ENCODE measurements at regions of chr22 and their contacts with region 1.

Region 1: GRCh38 chr22:21020802-21021429 is 6.0 kb downstream of the P2RX6 start:
- DNase-seq: peak; percentile 73

Region 2: DNA sequence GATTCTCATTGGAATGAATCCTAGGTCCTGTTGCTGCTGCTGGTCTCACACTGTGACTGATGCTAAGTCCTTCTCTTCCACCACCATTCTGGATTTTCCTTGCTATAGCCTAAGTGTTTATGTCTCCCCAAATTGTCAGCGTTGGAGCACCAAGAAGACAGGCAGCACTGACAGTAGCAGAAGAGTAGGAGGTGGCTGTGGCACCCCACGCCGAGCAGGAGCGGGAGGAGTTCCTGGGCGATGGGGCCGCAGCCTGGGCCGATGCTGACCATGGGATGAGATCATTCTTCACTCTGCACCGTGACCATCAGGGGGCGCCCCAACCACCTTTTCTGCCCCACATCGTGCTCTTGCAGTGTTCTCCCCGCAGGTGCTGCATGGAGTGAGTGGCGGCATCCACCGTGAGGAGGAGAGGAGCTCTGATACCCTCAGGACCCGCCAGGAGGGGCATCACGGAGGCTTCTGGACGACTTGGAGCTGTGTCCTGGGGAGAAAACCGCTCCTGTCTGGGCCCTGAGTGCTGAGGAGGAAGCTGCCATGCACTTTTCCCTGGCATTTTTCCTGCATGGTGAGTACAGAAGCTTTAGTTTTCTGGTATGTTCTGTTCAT is 81.8 kb after region 1 on chr22:
- CTCF ChIA-PET with region 1: interaction called, 14 read pairs
- POLR2A ChIA-PET with region 1: interaction called, 12 read pairs
- DNase-seq: peak; percentile 96

Measured in HEK293T (cell line).